Colonic mucosa (tissue), 4 donors: ENCODE measurements at regions of chr6 and their contacts with region 1.

Region 1: GRCh38 chr6:144931172-144932035 is 646.3 kb downstream of the UTRN start:
- DNase-seq: peak; percentile 52
- H3K4me3 ChIP-seq: no peak overlapping the region
- H3K27ac ChIP-seq: no peak overlapping the region
- H3K4me1 ChIP-seq: no peaks in the 10 kb centered on the region
- H3K27me3 ChIP-seq: no peaks in the 10 kb centered on the region
- CTCF ChIP-seq: no peak

Region 2: GRCh38 chr6:144647971-144648651 is 283.3 kb before region 1 on chr6:
- intact Hi-C with region 1: loop called (anchors 5 kb)
- DNase-seq: no peak
- H3K4me3 ChIP-seq: no peak overlapping the region
- H3K27ac ChIP-seq: no peak overlapping the region
- H3K4me1 ChIP-seq: no peaks in the 10 kb centered on the region
- H3K27me3 ChIP-seq: no peaks in the 10 kb centered on the region
- CTCF ChIP-seq: peak; percentile 16